WTC11 (cell line): ENCODE measurements at regions of chr3 and their contacts with region 1.

Region 1: GRCh38 chr3:122560680-122561079 is 3.4 kb downstream of the PARP9 start:
- DNase-seq: no peak
- ATAC-seq: peak; percentile 13
- H3K4me3 Mint-ChIP-seq: no peak overlapping the region
- H3K27ac Mint-ChIP-seq: peak overlapping the region; percentile 90
- H3K4me1 Mint-ChIP-seq: peaks cover 33% of the 10 kb centered on the region
- H3K27me3 Mint-ChIP-seq: peaks cover 6% of the 10 kb centered on the region
- CTCF ChIP-seq: no peak

Region 2: GRCh38 chr3:122642935-122643334 is 82.3 kb after region 1 on chr3:
- CTCF ChIA-PET with region 1: no interaction called
- POLR2A ChIA-PET with region 1: no interaction called
- DNase-seq: no peak
- ATAC-seq: no peak
- H3K4me3 Mint-ChIP-seq: no peak overlapping the region
- H3K27ac Mint-ChIP-seq: no peak overlapping the region
- H3K4me1 Mint-ChIP-seq: peaks cover 10% of the 10 kb centered on the region
- H3K27me3 Mint-ChIP-seq: peaks cover 19% of the 10 kb centered on the region
- CTCF ChIP-seq: no peak

Region 3: GRCh38 chr3:122660297-122660974 is 99.8 kb after region 1 on chr3:
- CTCF ChIA-PET with region 1: interaction called, 10 read pairs
- POLR2A ChIA-PET with region 1: no interaction called
- DNase-seq: peak; percentile 76
- ATAC-seq: peak; percentile 96
- H3K4me3 Mint-ChIP-seq: no peak overlapping the region
- H3K27ac Mint-ChIP-seq: no peak overlapping the region
- H3K4me1 Mint-ChIP-seq: no peaks in the 10 kb centered on the region
- H3K27me3 Mint-ChIP-seq: peaks cover 8% of the 10 kb centered on the region
- CTCF ChIP-seq: no peak; the same call in 1 of the 2 replicates